CD4-positive, alpha-beta T cell (primary cell): ENCODE measurements at regions of chr4 and their contacts with region 1.

Region 1: GRCh38 chr4:176065435-176066291 is at the start of gene WDR17:
- DNase-seq: peak; percentile 33 to 82 (median 60)
- ATAC-seq: peak; percentile 92
- H3K4me3 ChIP-seq: peak within 1 kb of the TSS; percentile 45
- H3K4me3 Mint-ChIP-seq: peak within 1 kb of the TSS; percentile 91
- H3K27ac ChIP-seq: no peak within 1 kb of the TSS
- H3K27ac Mint-ChIP-seq: no peak within 1 kb of the TSS
- H3K4me1 ChIP-seq: peaks cover 8% of the 10 kb centered on the region
- H3K4me1 Mint-ChIP-seq: peaks cover 15% of the 10 kb centered on the region
- H3K27me3 ChIP-seq: peaks cover 0 to 10% of the 10 kb centered on the region in 2 experiments
- H3K27me3 Mint-ChIP-seq: peaks cover 37% of the 10 kb centered on the region
- CTCF ChIP-seq: no peak
- total RNA-seq, gene WDR17: 0.47 to 0.64 TPM

Region 2: DNA sequence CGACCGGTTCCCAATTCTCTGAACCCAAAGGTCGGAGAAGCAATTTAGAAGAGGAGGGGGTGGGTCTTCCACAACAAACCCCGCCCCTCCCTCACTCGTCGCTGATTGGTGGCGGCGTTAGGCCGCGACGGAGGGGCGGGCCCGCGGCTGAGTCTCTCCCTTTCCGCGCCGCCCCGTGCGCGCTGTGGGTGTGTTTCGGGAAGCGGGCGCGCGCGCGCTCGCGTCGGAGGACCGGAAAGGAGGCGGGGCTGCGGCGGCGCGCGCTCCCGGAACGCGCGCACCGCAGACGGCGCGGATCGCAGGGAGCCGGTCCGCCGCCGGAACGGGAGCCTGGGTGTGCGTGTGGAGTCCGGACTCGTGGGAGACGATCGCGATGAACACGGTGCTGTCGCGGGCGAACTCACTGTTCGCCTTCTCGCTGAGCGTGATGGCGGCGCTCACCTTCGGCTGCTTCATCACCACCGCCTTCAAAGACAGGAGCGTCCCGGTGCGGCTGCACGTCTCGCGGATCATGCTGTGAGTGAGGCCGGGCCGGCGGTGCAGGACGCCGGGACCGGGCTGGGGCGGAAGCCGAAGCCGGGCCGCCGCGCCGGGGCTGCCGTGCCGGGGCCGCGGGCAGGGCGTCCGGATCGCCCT is 254.2 kb after region 1 on chr4 and contains the start of gene SPCS3:
- CTCF ChIA-PET with region 1: no interaction called
- POLR2A ChIA-PET with region 1: no interaction called
- intact Hi-C with region 1: loop called in 1 of 2 experiments (anchors 10 kb)
- DNase-seq: peak; percentile 89 to 99 (median 94)
- ATAC-seq: peak; percentile 89
- H3K4me3 ChIP-seq: peak within 1 kb of the TSS; percentile 72
- H3K4me3 Mint-ChIP-seq: peak within 1 kb of the TSS; percentile 96
- H3K27ac ChIP-seq: peak within 1 kb of the TSS; percentile 86 to 88
- H3K27ac Mint-ChIP-seq: peak within 1 kb of the TSS; percentile 90
- H3K4me1 ChIP-seq: peaks cover under 1% of the 10 kb centered on the region
- H3K4me1 Mint-ChIP-seq: peaks cover 60% of the 10 kb centered on the region
- H3K27me3 ChIP-seq: no peaks in the 10 kb centered on the region
- H3K27me3 Mint-ChIP-seq: no peaks in the 10 kb centered on the region
- CTCF ChIP-seq: no peak
- total RNA-seq, gene SPCS3: 149 TPM